Activated naive CD4-positive, alpha-beta T cell treated with anti-CD3 and anti-CD28 coated beads for 36 hours (primary cell): ENCODE measurements at regions of chr19 and their contacts with region 1.

Region 1: DNA sequence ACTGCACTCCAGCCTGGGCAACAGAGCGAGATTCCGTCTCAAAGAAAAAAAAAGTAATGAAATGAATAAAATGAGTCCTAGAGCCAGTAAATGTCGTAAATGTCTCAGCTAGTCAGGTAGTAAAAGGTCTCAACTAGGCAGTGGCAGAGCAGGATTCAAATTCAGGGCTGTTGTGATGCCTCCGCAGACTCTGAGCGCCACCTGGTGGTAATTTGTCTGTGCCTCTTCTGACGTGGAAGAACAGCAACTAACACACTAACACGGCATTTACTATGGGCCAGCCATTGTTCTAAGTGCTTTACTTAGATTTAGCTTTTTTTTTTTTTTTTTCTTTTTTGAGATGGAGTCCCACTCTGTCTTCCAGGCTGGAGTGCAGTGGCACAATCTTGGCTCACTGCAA is 30.2 kb downstream of the CYP2F1 start:
- DNase-seq: peak; percentile 95
- H3K4me3 Mint-ChIP-seq: no peak overlapping the region
- H3K27ac Mint-ChIP-seq: no peak overlapping the region
- H3K4me1 Mint-ChIP-seq: no peaks in the 10 kb centered on the region
- H3K27me3 Mint-ChIP-seq: peaks cover 3% of the 10 kb centered on the region

Region 2: DNA sequence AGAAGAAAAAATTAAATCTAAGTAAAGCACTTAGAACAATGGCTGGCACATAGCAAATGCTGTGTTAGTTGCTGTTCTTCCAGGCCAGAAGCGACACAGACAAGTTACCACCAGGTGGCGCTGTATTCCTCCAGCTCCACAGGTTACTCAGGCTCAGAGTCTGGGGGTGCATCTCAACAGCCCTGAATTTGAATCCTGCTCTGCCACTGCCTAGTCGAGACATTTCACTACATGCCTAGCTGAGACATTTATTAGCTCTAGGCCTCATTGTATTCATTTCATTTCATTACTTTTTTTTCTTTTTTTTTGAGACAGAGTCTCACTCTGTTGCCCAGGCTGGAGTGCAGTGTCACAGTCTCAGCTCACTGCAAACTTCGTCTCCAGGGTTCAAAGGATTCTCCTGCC is 169.8 kb before region 1 on chr19:
- CTCF ChIA-PET with region 1: interaction called, 11 read pairs
- intact Hi-C with region 1: loop called (anchors 1 kb)
- DNase-seq: peak; percentile 90
- H3K4me3 Mint-ChIP-seq: no peak overlapping the region
- H3K27ac Mint-ChIP-seq: no peak overlapping the region
- H3K4me1 Mint-ChIP-seq: peaks cover 23% of the 10 kb centered on the region
- H3K27me3 Mint-ChIP-seq: peaks cover 4% of the 10 kb centered on the region

Region 3: GRCh38 chr19:41123716-41124294 is 20.6 kb before region 1 on chr19:
- CTCF ChIA-PET with region 1: interaction called, 18 read pairs
- intact Hi-C with region 1: loop called (anchors 1 kb)
- DNase-seq: no peak
- H3K4me3 Mint-ChIP-seq: no peak overlapping the region
- H3K27ac Mint-ChIP-seq: no peak overlapping the region
- H3K4me1 Mint-ChIP-seq: peaks cover 27% of the 10 kb centered on the region
- H3K27me3 Mint-ChIP-seq: no peaks in the 10 kb centered on the region

Region 4: DNA sequence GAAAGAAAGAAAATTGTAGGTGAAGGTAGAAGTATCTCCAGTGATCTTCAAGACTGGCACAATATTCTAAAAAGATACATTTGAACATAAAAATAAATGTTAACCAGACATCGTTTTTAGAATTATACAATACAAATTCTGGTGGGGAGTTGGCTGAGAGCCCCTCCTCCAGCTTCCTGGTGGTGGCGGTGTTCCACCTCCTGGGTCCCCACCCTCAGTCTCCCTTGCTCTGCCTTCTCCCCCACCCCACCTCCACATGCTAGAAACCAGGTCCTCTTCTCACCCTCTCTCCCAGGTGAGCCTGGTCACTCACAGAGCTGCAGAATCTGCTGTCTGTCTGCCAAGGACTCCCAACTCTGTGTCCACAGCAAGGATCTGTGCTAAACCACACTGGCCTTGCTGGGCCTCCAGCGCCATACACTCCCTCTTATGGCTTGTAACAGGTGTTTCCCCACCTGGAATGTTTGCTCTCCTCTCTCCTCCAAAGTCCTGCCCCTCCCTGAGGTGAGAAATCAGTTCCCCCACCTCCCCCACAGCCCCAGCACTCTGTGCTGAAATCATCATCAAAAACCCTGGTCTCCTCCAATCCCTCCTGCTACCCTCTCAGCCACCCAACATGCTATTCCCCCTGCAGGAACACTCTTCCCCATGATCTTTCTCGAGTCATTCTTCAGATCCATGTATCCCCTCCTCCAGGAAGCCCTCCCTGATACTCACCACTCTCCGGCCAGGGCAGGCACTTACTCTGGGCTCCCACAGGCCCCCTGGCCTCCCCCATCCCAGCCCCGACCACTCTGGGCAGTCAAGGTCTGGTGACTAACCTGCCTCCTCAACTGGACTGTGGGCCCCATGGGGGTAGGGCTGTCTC is 28.1 kb after region 1 on chr19:
- CTCF ChIA-PET with region 1: no interaction called
- intact Hi-C with region 1: no loop called
- DNase-seq: no peak
- H3K4me3 Mint-ChIP-seq: no peak overlapping the region
- H3K27ac Mint-ChIP-seq: no peak overlapping the region
- H3K4me1 Mint-ChIP-seq: peaks cover 13% of the 10 kb centered on the region
- H3K27me3 Mint-ChIP-seq: no peaks in the 10 kb centered on the region

Region 5: DNA sequence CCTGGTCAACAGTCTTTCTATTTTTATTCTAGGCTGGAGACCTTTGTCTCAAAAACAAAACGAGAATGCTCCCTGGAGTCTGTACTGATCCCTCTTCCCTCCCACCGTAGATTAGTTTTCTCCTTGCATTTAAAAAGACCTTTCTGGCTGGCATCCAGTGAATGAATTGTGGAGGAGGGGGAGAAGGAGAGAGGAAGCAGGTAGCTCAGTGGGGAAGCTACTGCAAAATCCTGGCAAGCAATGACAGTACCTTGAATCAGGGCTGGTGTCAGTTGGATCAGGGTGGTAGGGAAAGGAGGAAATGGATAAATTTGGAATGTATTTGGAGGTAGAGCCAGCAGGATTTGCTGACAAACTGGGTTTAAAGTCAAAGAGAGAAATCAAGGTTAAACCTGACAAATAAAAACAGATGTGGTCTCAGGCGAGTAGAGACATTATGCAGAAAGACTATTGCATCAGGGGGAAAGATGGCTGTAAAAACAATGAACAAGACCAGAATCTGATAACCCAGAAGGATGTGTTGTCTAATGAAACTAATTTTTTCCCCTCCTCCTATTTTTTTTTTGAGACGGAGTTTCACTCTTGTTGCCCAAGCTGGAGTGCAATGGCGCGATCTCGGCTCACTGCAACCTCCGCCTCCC is 45.1 kb after region 1 on chr19:
- CTCF ChIA-PET with region 1: no interaction called
- intact Hi-C with region 1: no loop called
- DNase-seq: no peak
- H3K4me3 Mint-ChIP-seq: no peak overlapping the region
- H3K27ac Mint-ChIP-seq: no peak overlapping the region
- H3K4me1 Mint-ChIP-seq: peaks cover 12% of the 10 kb centered on the region
- H3K27me3 Mint-ChIP-seq: peaks cover 33% of the 10 kb centered on the region